ENCODE measurements at regions of chr9 and their contacts with region 1.

Region 1: DNA sequence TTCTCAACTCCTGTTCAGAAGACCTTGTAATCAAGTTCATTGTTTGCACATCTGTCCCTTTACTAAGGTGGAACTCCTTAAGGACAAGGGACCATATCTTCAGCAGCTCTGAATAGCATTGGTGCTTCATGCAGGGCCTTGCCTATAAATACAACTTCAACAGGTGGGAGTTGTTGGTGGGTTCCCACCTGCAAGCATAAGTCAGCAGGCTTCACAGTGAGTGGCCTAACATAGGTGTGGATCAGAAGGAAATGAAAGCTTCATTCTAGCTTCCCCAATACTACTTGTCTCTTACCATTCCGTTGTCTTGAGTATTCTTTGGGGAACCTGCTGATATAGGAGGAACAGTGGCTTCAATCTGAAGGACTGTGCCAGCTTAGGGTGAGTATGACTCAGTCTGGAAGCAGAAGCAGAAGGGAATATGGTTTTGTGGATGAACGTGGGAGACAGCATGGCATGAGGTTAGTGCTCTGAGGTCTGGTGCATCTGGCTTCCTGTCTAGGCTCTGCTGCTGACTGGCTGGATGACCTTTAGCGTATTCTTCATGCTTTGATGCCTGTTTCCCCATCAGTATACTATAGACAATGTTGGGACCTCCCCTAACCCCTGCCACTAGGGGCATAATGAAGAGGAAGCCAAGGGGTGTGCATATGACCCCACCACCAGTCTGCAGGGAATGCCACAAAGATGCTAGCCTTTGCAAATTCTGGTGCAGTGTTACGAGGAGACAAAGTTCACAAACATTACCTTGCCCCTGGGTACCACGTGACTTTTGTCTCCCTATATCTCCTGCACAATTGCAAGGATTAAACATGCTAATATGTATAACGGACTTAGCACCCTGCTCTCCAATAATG is 192.3 kb downstream of the PALM2AKAP2 start:
- DNase-seq: no peak
- ATAC-seq: peak; percentile 53
- H3K4me3 ChIP-seq: no peak overlapping the region
- H3K4me3 Mint-ChIP-seq: peak overlapping the region in 2 of 10 donors; percentile 13 to 29
- H3K27ac ChIP-seq: no peak overlapping the region
- H3K27ac Mint-ChIP-seq: peak overlapping the region in 7 of 9 donors; percentile 16 to 95 (median 69)
- H3K4me1 ChIP-seq: peaks cover 13 to 51% of the 10 kb centered on the region in 2 donors
- H3K4me1 Mint-ChIP-seq: peaks cover 37 to 89% (median 58%) of the 10 kb centered on the region in 7 donors
- H3K27me3 ChIP-seq: no peaks in the 10 kb centered on the region
- H3K27me3 Mint-ChIP-seq: no peaks in the 10 kb centered on the region

Region 2: DNA sequence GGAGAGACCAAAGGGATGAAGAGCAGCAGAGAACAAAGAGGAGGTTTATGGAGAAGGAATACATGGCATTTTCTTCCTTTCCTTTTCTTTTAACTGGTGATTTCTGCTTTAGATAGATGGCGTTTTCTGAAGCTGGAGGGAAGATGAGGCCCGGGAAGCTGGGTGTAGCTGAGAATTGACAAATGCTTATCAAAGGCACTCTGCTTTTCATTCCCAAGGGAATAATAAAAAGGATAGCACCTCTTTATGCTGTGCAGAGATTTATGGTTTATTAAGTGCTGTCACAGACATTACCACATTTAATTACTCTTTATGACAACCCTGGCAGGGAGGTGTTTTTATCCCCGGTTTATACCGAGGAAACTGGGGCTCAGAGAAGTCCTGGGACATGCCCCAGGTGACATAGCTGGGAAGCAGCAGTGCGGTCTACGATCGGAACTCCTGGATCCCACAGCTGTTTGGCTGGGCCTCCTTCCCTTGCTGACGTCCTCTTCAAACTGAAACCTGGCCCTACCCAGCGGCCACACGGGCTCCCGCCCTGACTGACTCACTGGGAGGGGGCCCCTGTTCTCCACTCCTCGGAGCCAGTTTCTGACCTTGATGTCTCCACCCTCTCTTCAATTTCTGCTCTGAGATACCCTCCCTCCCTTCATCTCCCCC is 643.1 kb before region 1 on chr9:
- CTCF ChIA-PET with region 1: no interaction called
- POLR2A ChIA-PET with region 1: no interaction called
- intact Hi-C with region 1: no loop called
- DNase-seq: no peak
- ATAC-seq: no peak
- H3K4me3 ChIP-seq: no peak overlapping the region
- H3K4me3 Mint-ChIP-seq: no peak overlapping the region
- H3K27ac ChIP-seq: no peak overlapping the region
- H3K27ac Mint-ChIP-seq: no peak overlapping the region
- H3K4me1 ChIP-seq: no peaks in the 10 kb centered on the region
- H3K4me1 Mint-ChIP-seq: no peaks in the 10 kb centered on the region
- H3K27me3 ChIP-seq: no peaks in the 10 kb centered on the region
- H3K27me3 Mint-ChIP-seq: peaks cover 20 to 41% (median 30%) of the 10 kb centered on the region in 5 donors

Region 3: GRCh38 chr9:109903515-109904138 is 68.6 kb before region 1 on chr9:
- CTCF ChIA-PET with region 1: interaction called, 6 read pairs
- POLR2A ChIA-PET with region 1: interaction called, 3 read pairs
- intact Hi-C with region 1: loop called (anchors 2 to 5 kb)
- DNase-seq: peak; percentile 11 to 73 (median 53)
- ATAC-seq: peak; percentile 84
- H3K4me3 ChIP-seq: no peak overlapping the region
- H3K4me3 Mint-ChIP-seq: no peak overlapping the region
- H3K27ac ChIP-seq: no peak overlapping the region
- H3K27ac Mint-ChIP-seq: no peak overlapping the region
- H3K4me1 ChIP-seq: no peaks in the 10 kb centered on the region
- H3K4me1 Mint-ChIP-seq: peaks cover 0 to 37% (median 5%) of the 10 kb centered on the region in 7 donors
- H3K27me3 ChIP-seq: no peaks in the 10 kb centered on the region
- H3K27me3 Mint-ChIP-seq: no peaks in the 10 kb centered on the region

Region 4: DNA sequence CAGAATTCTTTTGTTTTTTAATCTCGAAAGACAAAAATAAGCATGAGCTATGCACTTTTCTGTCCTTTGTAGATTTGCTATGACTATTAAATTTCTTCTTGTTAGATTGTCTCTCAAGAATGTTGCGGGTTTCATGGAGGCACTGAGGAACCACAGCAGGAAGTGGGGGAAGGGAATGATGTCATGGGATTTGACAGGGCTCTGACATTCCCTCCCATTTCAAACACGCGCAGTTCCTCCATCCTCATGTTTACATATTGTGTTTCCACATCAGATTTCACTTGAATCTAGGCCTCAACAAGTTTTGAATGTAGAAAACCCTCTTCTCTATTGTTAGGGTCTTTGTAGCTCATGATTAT is 37.4 kb before region 1 on chr9:
- CTCF ChIA-PET with region 1: interaction called, 3 read pairs
- POLR2A ChIA-PET with region 1: interaction called, 6 read pairs
- intact Hi-C with region 1: loop called in 1 of 2 experiments (anchors 5 kb)
- DNase-seq: no peak
- ATAC-seq: no peak
- H3K4me3 ChIP-seq: no peak overlapping the region
- H3K4me3 Mint-ChIP-seq: no peak overlapping the region
- H3K27ac ChIP-seq: no peak overlapping the region
- H3K27ac Mint-ChIP-seq: peak overlapping the region in 5 of 9 donors; percentile 1 to 67 (median 46)
- H3K4me1 ChIP-seq: peaks cover 0 to 16% of the 10 kb centered on the region in 2 donors
- H3K4me1 Mint-ChIP-seq: peaks cover 14 to 48% (median 34%) of the 10 kb centered on the region in 7 donors
- H3K27me3 ChIP-seq: no peaks in the 10 kb centered on the region
- H3K27me3 Mint-ChIP-seq: peaks cover 0 to 8% (median 0%) of the 10 kb centered on the region in 5 donors

Region 5: GRCh38 chr9:110007477-110008270 is 35.4 kb after region 1 on chr9:
- CTCF ChIA-PET with region 1: no interaction called
- POLR2A ChIA-PET with region 1: interaction called, 3 read pairs
- intact Hi-C with region 1: loop called (anchors 2 to 5 kb)
- DNase-seq: no peak
- ATAC-seq: no peak
- H3K4me3 ChIP-seq: no peak overlapping the region
- H3K4me3 Mint-ChIP-seq: peak overlapping the region in 1 of 10 donors; percentile 76
- H3K27ac ChIP-seq: no peak overlapping the region
- H3K27ac Mint-ChIP-seq: peak overlapping the region in 4 of 9 donors; percentile 8 to 81 (median 29)
- H3K4me1 ChIP-seq: peaks cover 0 to 6% of the 10 kb centered on the region in 2 donors
- H3K4me1 Mint-ChIP-seq: peaks cover 11 to 39% (median 25%) of the 10 kb centered on the region in 7 donors
- H3K27me3 ChIP-seq: no peaks in the 10 kb centered on the region
- H3K27me3 Mint-ChIP-seq: peaks cover 0 to 17% (median 0%) of the 10 kb centered on the region in 5 donors

Region 6: GRCh38 chr9:110048403-110048975 is 76.2 kb after region 1 on chr9:
- CTCF ChIA-PET with region 1: no interaction called
- POLR2A ChIA-PET with region 1: interaction called, 11 read pairs
- intact Hi-C with region 1: loop called (anchors 1 kb)
- DNase-seq: peak; percentile 43 to 88 (median 71)
- ATAC-seq: peak; percentile 97
- H3K4me3 ChIP-seq: peak overlapping the region; percentile 83
- H3K4me3 Mint-ChIP-seq: peak overlapping the region; percentile 87 to 99 (median 92)
- H3K27ac ChIP-seq: no peak overlapping the region
- H3K27ac Mint-ChIP-seq: peak overlapping the region in 8 of 9 donors; percentile 54 to 90 (median 70)
- H3K4me1 ChIP-seq: peaks cover 5 to 10% of the 10 kb centered on the region in 2 donors
- H3K4me1 Mint-ChIP-seq: peaks cover 23 to 55% (median 38%) of the 10 kb centered on the region in 7 donors
- H3K27me3 ChIP-seq: no peaks in the 10 kb centered on the region
- H3K27me3 Mint-ChIP-seq: peaks cover 0 to 16% (median 11%) of the 10 kb centered on the region in 5 donors